ENCODE measurements at regions of chr15 and their contacts with region 1.

Region 1: GRCh38 chr15:40906091-40906990 is 12.1 kb downstream of the VPS18 start:
- DNase-seq: peak; percentile 96
- ATAC-seq: peak; percentile 80
- H3K4me3 ChIP-seq: peak overlapping the region; percentile 29
- H3K27ac ChIP-seq: peak overlapping the region; percentile 78
- H3K4me1 ChIP-seq: peaks cover 18% of the 10 kb centered on the region
- H3K27me3 ChIP-seq: no peaks in the 10 kb centered on the region
- CTCF ChIP-seq: peak; percentile 82
- POLR2A ChIP-seq: peak; percentile 45; the same call in 1 of the 2 replicates
- RAD21 ChIP-seq: peak; percentile 81

Region 2: GRCh38 chr15:40787344-40787841 is 118.9 kb before region 1 on chr15:
- CTCF ChIA-PET with region 1: no interaction called
- POLR2A ChIA-PET with region 1: no interaction called
- dilution Hi-C with region 1: no loop called
- in situ Hi-C with region 1: no loop called
- intact Hi-C with region 1: no loop called
- DNase-seq: peak; percentile 62
- ATAC-seq: 0 out of 2 replicates have a peak, but pooled peaks have one; percentile 15
- H3K4me3 ChIP-seq: no peak overlapping the region
- H3K27ac ChIP-seq: no peak overlapping the region
- H3K4me1 ChIP-seq: peaks cover 10% of the 10 kb centered on the region
- H3K27me3 ChIP-seq: no peaks in the 10 kb centered on the region
- CTCF ChIP-seq: no peak
- POLR2A ChIP-seq: no peak
- RAD21 ChIP-seq: no peak

Region 3: DNA sequence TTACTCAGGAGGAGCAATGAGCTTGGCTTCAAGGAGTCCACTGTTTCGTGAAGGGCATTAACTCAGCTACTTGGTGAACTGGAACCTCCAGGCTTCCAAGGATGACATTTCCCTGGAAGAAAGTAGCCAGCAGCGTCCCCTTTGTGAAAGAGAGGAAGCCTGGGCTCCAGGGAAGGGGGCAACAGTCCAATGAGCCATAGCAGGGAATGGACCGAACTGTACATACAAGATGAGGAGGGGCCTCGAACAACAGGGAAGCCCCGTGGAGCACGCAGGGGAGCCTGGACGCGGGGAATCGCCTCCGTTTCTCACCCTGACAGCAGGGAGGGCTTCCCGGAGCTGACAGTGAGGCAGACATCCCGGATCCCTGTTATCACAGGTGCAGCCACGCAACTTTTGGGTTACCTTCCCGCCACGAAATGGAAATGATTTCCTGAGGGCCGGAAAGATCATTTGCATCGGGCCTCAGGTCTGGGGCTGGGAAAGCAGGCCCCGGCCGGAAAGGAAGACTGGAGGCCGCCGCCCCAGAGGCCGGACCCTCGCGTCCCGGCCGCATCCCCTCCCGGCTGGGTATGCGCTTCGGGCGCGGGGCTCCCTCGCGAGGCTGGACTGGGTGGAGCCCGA is 63.0 kb before region 1 on chr15:
- CTCF ChIA-PET with region 1: no interaction called
- POLR2A ChIA-PET with region 1: no interaction called
- dilution Hi-C with region 1: no loop called
- in situ Hi-C with region 1: no loop called
- intact Hi-C with region 1: no loop called
- DNase-seq: no peak
- ATAC-seq: no peak
- H3K4me3 ChIP-seq: peak overlapping the region; percentile 26; the same call in 1 of the 2 replicates
- H3K27ac ChIP-seq: no peak overlapping the region
- H3K4me1 ChIP-seq: peaks cover 5% of the 10 kb centered on the region
- H3K27me3 ChIP-seq: peaks cover 38% of the 10 kb centered on the region
- CTCF ChIP-seq: no peak
- POLR2A ChIP-seq: no peak
- RAD21 ChIP-seq: no peak

Region 4: GRCh38 chr15:40893733-40894688 is 12.3 kb before region 1 on chr15 and contains the start of gene VPS18:
- CTCF ChIA-PET with region 1: interaction called, 15 read pairs
- POLR2A ChIA-PET with region 1: no interaction called
- dilution Hi-C with region 1: no loop called
- in situ Hi-C with region 1: no loop called
- intact Hi-C with region 1: no loop called
- DNase-seq: peak; percentile 97
- ATAC-seq: peak; percentile 98
- H3K4me3 ChIP-seq: peak within 1 kb of the TSS; percentile 84
- H3K27ac ChIP-seq: peak within 1 kb of the TSS; percentile 72
- H3K4me1 ChIP-seq: peaks cover 9% of the 10 kb centered on the region; the same call in 1 of the 2 replicates
- H3K27me3 ChIP-seq: no peaks in the 10 kb centered on the region; the same call in 1 of the 2 replicates
- CTCF ChIP-seq: peak; percentile 94
- POLR2A ChIP-seq: peak; percentile 71; the same call in 1 of the 2 replicates
- RAD21 ChIP-seq: peak; percentile 88
- total RNA-seq, gene VPS18: 30.0 and 32.3 TPM in 2 replicates

Region 5: DNA sequence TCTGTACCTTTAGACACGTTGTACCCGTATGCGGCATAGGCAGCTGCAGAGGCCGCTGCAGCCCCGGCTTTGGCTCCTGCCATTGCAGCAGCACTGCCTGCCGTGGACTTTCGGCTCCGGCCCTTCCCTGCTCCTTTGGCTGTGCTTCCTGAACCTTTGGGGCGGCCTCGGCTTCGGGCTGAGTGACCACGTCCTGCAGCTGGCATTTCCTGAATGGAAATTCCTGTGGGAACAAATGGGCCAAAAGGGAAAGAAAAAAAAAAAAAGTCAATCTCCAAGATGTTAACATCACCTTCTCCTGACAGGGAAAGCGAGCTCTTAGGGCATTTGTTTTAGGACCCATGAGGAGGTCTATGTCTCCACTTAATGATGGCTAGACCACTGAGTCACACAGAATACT is 76.5 kb after region 1 on chr15:
- CTCF ChIA-PET with region 1: no interaction called
- POLR2A ChIA-PET with region 1: no interaction called
- dilution Hi-C with region 1: no loop called
- in situ Hi-C with region 1: no loop called
- intact Hi-C with region 1: no loop called
- DNase-seq: peak; percentile 93
- ATAC-seq: peak; percentile 66
- H3K4me3 ChIP-seq: no peak overlapping the region
- H3K27ac ChIP-seq: peak overlapping the region; percentile 94
- H3K4me1 ChIP-seq: peaks cover 31% of the 10 kb centered on the region
- H3K27me3 ChIP-seq: no peaks in the 10 kb centered on the region
- CTCF ChIP-seq: 0 out of 2 replicates have a peak, but pooled peaks have one; percentile 3
- POLR2A ChIP-seq: no peak
- RAD21 ChIP-seq: peak; percentile 15

Region 6: GRCh38 chr15:41013698-41014414 is 107.5 kb after region 1 on chr15:
- CTCF ChIA-PET with region 1: interaction called, 20 read pairs
- POLR2A ChIA-PET with region 1: no interaction called
- dilution Hi-C with region 1: no loop called
- in situ Hi-C with region 1: no loop called
- intact Hi-C with region 1: loop called (anchors 2 kb)
- DNase-seq: peak; percentile 86
- ATAC-seq: peak; percentile 16; the same call in 1 of the 2 replicates
- H3K4me3 ChIP-seq: no peak overlapping the region
- H3K27ac ChIP-seq: 0 out of 2 replicates have a peak overlapping the region, but pooled peaks have one; percentile 37
- H3K4me1 ChIP-seq: peaks cover 31% of the 10 kb centered on the region
- H3K27me3 ChIP-seq: no peaks in the 10 kb centered on the region
- CTCF ChIP-seq: no peak
- POLR2A ChIP-seq: no peak
- RAD21 ChIP-seq: no peak

Region 7: GRCh38 chr15:41116116-41116871 is 210.0 kb after region 1 on chr15 and contains the start of gene INO80:
- CTCF ChIA-PET with region 1: no interaction called
- POLR2A ChIA-PET with region 1: no interaction called
- dilution Hi-C with region 1: no loop called
- in situ Hi-C with region 1: no loop called
- intact Hi-C with region 1: loop called (anchors 10 kb)
- DNase-seq: peak; percentile 99
- ATAC-seq: peak; percentile 93
- H3K4me3 ChIP-seq: peak within 1 kb of the TSS; percentile 75
- H3K27ac ChIP-seq: peak within 1 kb of the TSS; percentile 98
- H3K4me1 ChIP-seq: no peaks in the 10 kb centered on the region; the same call in 1 of the 2 replicates
- H3K27me3 ChIP-seq: no peaks in the 10 kb centered on the region
- CTCF ChIP-seq: no peak
- POLR2A ChIP-seq: peak; percentile 76
- RAD21 ChIP-seq: no peak
- total RNA-seq, gene INO80: 13.3 and 15.6 TPM in 2 replicates

Region 8: GRCh38 chr15:41331833-41332787 is 425.8 kb after region 1 on chr15 and contains the start of gene OIP5:
- CTCF ChIA-PET with region 1: no interaction called
- POLR2A ChIA-PET with region 1: no interaction called
- dilution Hi-C with region 1: no loop called
- in situ Hi-C with region 1: no loop called
- intact Hi-C with region 1: loop called (anchors 1 kb)
- DNase-seq: peak; percentile 100
- ATAC-seq: peak; percentile 98
- H3K4me3 ChIP-seq: peak within 1 kb of the TSS; percentile 70
- H3K27ac ChIP-seq: peak within 1 kb of the TSS; percentile 45; the same call in 1 of the 2 replicates
- H3K4me1 ChIP-seq: no peaks in the 10 kb centered on the region
- H3K27me3 ChIP-seq: no peaks in the 10 kb centered on the region
- CTCF ChIP-seq: peak; percentile 64
- POLR2A ChIP-seq: 0 out of 2 replicates have a peak, but pooled peaks have one; percentile 12
- RAD21 ChIP-seq: peak; percentile 69
- total RNA-seq, gene OIP5: 4.1 and 7.5 TPM in 2 replicates

Region 9: GRCh38 chr15:42490671-42491544 is 1584.6 kb after region 1 on chr15 and contains the start of gene ZNF106:
- CTCF ChIA-PET with region 1: no interaction called
- POLR2A ChIA-PET with region 1: no interaction called
- dilution Hi-C with region 1: no loop called
- in situ Hi-C with region 1: no loop called
- intact Hi-C with region 1: no loop called
- DNase-seq: peak; percentile 92
- ATAC-seq: peak; percentile 56
- H3K4me3 ChIP-seq: peak within 1 kb of the TSS; percentile 97
- H3K27ac ChIP-seq: peak within 1 kb of the TSS; percentile 99
- H3K4me1 ChIP-seq: peaks cover 3% of the 10 kb centered on the region
- H3K27me3 ChIP-seq: no peaks in the 10 kb centered on the region
- CTCF ChIP-seq: peak; percentile 20; the same call in 1 of the 2 replicates
- POLR2A ChIP-seq: peak; percentile 80
- RAD21 ChIP-seq: peak; percentile 13; the same call in 1 of the 2 replicates
- total RNA-seq, gene ZNF106: 87.5 and 107 TPM in 2 replicates

Measured in IMR-90 (cell line).